ENCODE measurements at regions of chr21 and their contacts with region 1.

Region 1: DNA sequence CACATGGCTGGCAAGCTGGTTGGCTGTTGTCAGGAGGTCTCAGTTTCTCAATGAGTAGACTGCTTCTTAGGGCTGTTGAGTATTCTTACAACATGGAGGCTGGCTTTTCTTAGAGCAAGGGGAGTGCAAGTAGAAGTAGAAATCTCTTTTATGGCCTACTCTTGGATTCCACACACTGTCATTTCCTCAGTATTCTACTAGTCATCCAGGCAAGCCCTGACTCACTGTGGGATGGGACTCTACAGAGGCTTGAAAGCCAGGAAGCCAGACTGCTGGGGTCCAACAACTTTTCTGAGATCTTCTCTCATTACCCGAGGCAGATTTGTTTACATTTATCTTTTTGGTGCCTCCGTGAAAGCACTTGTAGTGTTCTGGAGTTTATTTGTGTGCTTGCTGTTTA is 196.2 kb upstream of the APP start:
- DNase-seq: no peak
- ATAC-seq: no peak
- H3K4me3 ChIP-seq: no peak overlapping the region
- H3K27ac ChIP-seq: no peak overlapping the region
- H3K4me1 ChIP-seq: no peaks in the 10 kb centered on the region
- H3K27me3 ChIP-seq: no peaks in the 10 kb centered on the region
- CTCF ChIP-seq: no peak
- POLR2A ChIP-seq: no peak

Region 2: GRCh38 chr21:26224351-26224750 is 142.4 kb before region 1 on chr21:
- intact Hi-C with region 1: no loop called
- DNase-seq: no peak
- ATAC-seq: no peak
- H3K4me3 ChIP-seq: no peak overlapping the region
- H3K27ac ChIP-seq: no peak overlapping the region
- H3K4me1 ChIP-seq: no peaks in the 10 kb centered on the region
- H3K27me3 ChIP-seq: no peaks in the 10 kb centered on the region
- CTCF ChIP-seq: no peak
- POLR2A ChIP-seq: no peak

Region 3: DNA sequence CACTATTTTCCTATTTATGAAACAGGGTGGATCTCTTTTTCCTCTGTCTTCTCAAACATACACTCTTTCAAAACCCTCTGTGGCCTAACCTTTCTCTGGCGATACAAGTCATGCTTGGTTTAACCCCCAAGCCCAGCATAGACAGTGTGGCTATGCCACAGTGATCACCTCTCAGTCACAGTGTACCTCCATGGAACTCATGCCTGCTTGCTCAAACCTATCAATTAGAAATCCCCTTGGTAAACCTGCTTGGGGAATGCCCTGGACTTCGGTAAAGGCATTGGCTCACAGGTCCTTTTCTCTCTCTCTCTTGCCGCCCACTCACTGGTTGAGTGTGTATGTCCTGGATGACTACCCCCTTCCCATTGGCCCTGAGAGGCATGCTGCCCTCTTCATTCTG is 58.8 kb after region 1 on chr21:
- intact Hi-C with region 1: loop called in 1 of 10 experiments (anchors 10 kb)
- DNase-seq: no peak
- ATAC-seq: no peak
- H3K4me3 ChIP-seq: no peak overlapping the region
- H3K27ac ChIP-seq: no peak overlapping the region
- H3K4me1 ChIP-seq: no peaks in the 10 kb centered on the region
- H3K27me3 ChIP-seq: no peaks in the 10 kb centered on the region
- CTCF ChIP-seq: no peak
- POLR2A ChIP-seq: no peak